ENCODE measurements at regions of chr7 and their contacts with region 1.

Region 1: GRCh38 chr7:30983042-30983913 is 19.5 kb downstream of the GHRHR start:
- DNase-seq: no peak
- H3K4me3 ChIP-seq: no peak overlapping the region
- H3K27me3 ChIP-seq: peaks cover 6% of the 10 kb centered on the region
- CTCF ChIP-seq: peak; percentile 95

Region 2: DNA sequence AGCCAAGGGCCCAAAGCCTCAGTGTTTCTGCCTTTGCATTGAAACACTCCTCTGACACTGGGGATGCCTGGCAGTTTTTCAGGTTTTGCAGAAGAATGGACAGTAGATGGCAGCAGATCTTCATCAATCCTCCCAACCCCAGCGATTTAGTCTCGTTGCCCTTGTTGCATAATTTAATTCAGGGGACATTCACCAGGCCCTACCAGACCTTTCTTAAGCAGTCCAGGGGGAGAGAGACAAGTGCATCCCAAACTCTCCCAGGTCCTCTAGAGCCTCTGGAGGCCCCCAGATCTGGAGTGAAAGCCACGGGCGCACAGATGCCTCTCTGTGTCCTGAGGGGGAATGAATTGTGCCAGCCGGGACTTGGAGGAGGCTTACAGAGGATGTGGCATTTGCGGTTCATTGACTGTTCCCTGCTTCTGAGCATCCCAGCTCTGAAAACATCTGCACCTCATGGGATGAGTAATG is 182.5 kb before region 1 on chr7:
- CTCF ChIA-PET with region 1: interaction called, 16 read pairs
- POLR2A ChIA-PET with region 1: no interaction called
- DNase-seq: no peak
- H3K4me3 ChIP-seq: no peak overlapping the region
- H3K27me3 ChIP-seq: peaks cover 1% of the 10 kb centered on the region; the same call in 1 of the 2 replicates
- CTCF ChIP-seq: peak; percentile 69

Region 3: GRCh38 chr7:30996256-30996655 is 13.0 kb after region 1 on chr7:
- CTCF ChIA-PET with region 1: interaction called, 15 read pairs
- POLR2A ChIA-PET with region 1: no interaction called
- DNase-seq: no peak
- H3K4me3 ChIP-seq: no peak overlapping the region
- H3K27me3 ChIP-seq: no peaks in the 10 kb centered on the region
- CTCF ChIP-seq: no peak

Region 4: GRCh38 chr7:31002256-31002655 is 19.0 kb after region 1 on chr7:
- CTCF ChIA-PET with region 1: interaction called, 11 read pairs
- POLR2A ChIA-PET with region 1: no interaction called
- DNase-seq: no peak
- H3K4me3 ChIP-seq: no peak overlapping the region
- H3K27me3 ChIP-seq: no peaks in the 10 kb centered on the region
- CTCF ChIP-seq: no peak

Region 5: GRCh38 chr7:31129067-31129466 is 145.8 kb after region 1 on chr7:
- CTCF ChIA-PET with region 1: interaction called, 255 read pairs
- POLR2A ChIA-PET with region 1: no interaction called
- DNase-seq: no peak
- H3K4me3 ChIP-seq: no peak overlapping the region
- H3K27me3 ChIP-seq: no peaks in the 10 kb centered on the region; the same call in 1 of the 2 replicates
- CTCF ChIP-seq: no peak

Region 6: DNA sequence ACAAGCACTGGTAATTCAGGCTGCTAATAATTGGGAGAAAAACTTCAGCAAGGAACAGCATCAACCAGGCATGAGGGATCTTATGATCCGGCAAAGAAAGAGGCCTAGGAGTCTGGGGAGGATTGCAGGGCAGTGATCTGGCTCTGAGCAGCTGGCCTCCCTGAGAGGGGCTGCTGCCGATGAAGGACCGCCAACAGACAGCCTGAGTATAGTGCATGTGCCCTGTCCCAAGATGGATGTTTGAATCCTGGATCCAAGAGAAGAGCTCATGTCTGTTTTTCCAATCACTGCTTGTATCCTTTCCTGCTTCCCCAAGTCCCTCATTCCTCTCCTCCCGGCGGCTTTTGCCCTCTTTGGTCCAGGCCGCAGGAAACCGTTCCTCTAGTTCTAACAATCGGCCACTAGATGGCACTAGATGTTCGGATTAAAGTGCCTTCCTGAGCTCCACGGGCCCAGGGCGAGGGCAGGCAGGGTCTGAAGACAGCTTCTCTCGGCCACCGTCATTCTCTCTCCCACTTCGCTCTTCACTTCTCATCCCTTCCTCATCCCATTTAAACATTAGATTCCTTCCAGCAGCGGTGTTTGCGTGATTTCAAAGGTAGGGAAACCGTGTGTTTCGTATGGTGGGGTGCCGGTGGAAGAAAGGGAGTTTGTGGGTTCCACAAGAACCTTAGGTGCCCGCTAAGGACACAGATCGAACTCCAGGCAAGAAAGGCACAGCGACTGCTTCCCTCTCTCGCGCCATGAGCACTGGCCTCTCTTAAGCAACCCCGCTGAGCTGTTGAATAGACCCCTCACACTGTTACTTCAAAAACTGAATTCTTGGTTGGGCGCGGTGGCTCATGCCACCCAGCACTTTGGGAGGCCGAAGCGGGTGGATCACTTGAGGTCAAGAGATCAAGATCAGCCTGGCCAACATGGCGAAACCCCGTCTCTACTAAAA is 151.2 kb after region 1 on chr7:
- CTCF ChIA-PET with region 1: interaction called, 25 read pairs
- POLR2A ChIA-PET with region 1: no interaction called
- DNase-seq: peak; percentile 5
- H3K4me3 ChIP-seq: no peak overlapping the region
- H3K27me3 ChIP-seq: no peaks in the 10 kb centered on the region
- CTCF ChIP-seq: peak; percentile 77